HepG2 (cell line): ENCODE measurements at regions of chr16 and their contacts with region 1.

Region 1: GRCh38 chr16:66660422-66661209 is 35.9 kb downstream of the CMTM4 start:
- DNase-seq: peak; percentile 84
- ATAC-seq: peak; percentile 98
- H3K4me3 ChIP-seq: peak overlapping the region in 2 of 3 experiments; percentile 0 to 23; a peak in 2 of 6 replicates
- H3K27ac ChIP-seq: peak overlapping the region; percentile 39
- H3K4me1 ChIP-seq: peaks cover 37% of the 10 kb centered on the region
- H3K27me3 ChIP-seq: no peaks in the 10 kb centered on the region
- CTCF ChIP-seq: peak; percentile 77
- EP300 ChIP-seq: no peak
- POLR2A ChIP-seq: no peak
- RAD21 ChIP-seq: no peak

Region 2: DNA sequence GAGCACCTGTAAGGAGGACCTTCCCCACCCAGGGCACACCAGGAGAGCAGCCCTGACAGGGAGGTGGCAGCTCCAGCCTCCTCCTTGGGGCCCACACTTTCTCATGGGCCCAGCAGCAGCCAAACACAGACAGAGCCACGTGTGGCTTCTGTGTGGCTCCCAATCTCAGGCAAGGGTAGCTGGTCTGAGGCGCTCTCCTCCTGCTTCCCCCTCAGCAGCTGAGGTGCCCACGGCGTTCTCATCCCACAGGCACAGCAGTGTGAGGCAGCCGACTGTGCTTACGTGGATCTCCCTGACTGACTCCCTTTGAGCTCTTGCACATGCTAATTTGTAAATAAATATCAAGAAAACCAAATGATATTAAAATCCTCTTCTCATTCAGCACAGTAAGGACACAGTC is 25.2 kb before region 1 on chr16:
- CTCF ChIA-PET with region 1: no interaction called
- POLR2A ChIA-PET with region 1: no interaction called
- in situ Hi-C with region 1: no loop called
- intact Hi-C with region 1: no loop called
- DNase-seq: no peak
- ATAC-seq: peak; percentile 56
- H3K4me3 ChIP-seq: no peak overlapping the region
- H3K27ac ChIP-seq: no peak overlapping the region
- H3K4me1 ChIP-seq: peaks cover 18% of the 10 kb centered on the region
- H3K27me3 ChIP-seq: no peaks in the 10 kb centered on the region
- CTCF ChIP-seq: no peak
- EP300 ChIP-seq: no peak
- POLR2A ChIP-seq: no peak
- RAD21 ChIP-seq: no peak

Region 3: GRCh38 chr16:66692330-66692729 is 31.7 kb after region 1 on chr16:
- CTCF ChIA-PET with region 1: no interaction called
- POLR2A ChIA-PET with region 1: no interaction called
- in situ Hi-C with region 1: no loop called
- intact Hi-C with region 1: loop called (anchors 2 kb)
- DNase-seq: no peak
- ATAC-seq: no peak
- H3K4me3 ChIP-seq: no peak overlapping the region
- H3K27ac ChIP-seq: no peak overlapping the region
- H3K4me1 ChIP-seq: peaks cover 75% of the 10 kb centered on the region
- H3K27me3 ChIP-seq: peaks cover 0 to 2% of the 10 kb centered on the region in 2 experiments; a peak in 3 of 5 replicates
- CTCF ChIP-seq: no peak
- EP300 ChIP-seq: no peak
- POLR2A ChIP-seq: no peak
- RAD21 ChIP-seq: no peak

Region 4: DNA sequence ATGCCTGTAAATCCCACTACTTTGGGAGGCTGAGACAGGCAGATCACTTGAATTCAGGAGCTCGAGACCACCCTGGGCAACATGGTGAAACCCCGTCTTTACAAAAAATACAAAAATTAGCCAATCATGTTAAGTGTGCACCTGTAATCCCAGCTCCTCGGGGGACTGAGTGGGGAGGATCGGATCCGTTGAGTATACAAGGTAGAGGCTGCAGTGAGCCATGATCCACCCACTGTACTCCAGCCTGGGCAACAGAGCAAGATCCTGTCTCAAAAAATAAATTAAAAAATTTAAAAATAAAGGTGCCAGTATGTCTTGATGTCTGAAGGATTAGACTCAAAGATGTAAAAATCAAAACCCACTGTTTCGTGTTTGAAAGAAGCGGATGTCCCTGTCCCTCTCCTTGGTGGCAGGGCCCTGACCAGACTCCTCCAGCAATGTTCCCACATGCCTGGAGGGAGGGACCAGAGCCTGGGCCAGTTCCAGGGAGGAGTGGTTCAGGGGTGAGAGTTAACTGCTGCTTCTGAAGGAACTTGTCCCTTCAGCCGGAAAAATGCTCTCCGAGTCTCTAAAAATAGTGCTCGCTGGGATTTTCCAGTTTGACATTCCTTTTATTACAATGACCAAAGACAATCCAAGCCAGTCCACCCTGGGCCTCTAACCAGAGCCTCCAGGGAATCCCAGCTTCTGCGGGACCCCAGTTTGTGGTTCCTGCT is 45.3 kb after region 1 on chr16:
- CTCF ChIA-PET with region 1: no interaction called
- POLR2A ChIA-PET with region 1: no interaction called
- in situ Hi-C with region 1: no loop called
- intact Hi-C with region 1: no loop called
- DNase-seq: no peak
- ATAC-seq: no peak
- H3K4me3 ChIP-seq: no peak overlapping the region
- H3K27ac ChIP-seq: no peak overlapping the region
- H3K4me1 ChIP-seq: 0 out of 2 replicates have a peak, but pooled peaks cover 7% of the 10 kb centered on the region
- H3K27me3 ChIP-seq: peaks cover 0 to 24% of the 10 kb centered on the region in 2 experiments; a peak in 2 of 5 replicates
- CTCF ChIP-seq: no peak
- EP300 ChIP-seq: no peak
- POLR2A ChIP-seq: no peak
- RAD21 ChIP-seq: no peak

Region 5: DNA sequence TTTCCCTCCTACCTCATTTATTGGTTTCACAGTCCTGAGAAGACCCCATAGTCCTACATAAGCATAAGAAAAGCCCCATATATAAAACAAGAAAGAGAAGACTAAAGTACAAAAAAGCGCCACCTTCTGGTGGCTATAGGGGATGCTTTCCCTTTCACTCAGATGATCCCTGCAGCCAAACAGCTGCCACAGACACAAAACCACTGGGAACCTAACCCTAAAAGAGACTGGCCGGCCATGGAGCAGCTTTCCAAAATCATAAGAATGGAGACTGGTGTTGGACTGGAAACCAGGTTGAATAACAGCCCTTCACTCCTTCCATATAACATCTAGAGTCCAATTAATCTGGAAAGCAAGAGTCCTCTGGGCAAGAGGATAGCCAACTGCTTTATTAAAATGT is 79.4 kb after region 1 on chr16:
- CTCF ChIA-PET with region 1: interaction called, 5 read pairs
- POLR2A ChIA-PET with region 1: no interaction called
- in situ Hi-C with region 1: no loop called
- intact Hi-C with region 1: loop called (anchors 2 kb)
- DNase-seq: peak; percentile 39
- ATAC-seq: peak; percentile 81
- H3K4me3 ChIP-seq: no peak overlapping the region
- H3K27ac ChIP-seq: peak overlapping the region; percentile 3
- H3K4me1 ChIP-seq: peaks cover 30% of the 10 kb centered on the region
- H3K27me3 ChIP-seq: no peaks in the 10 kb centered on the region
- CTCF ChIP-seq: peak; percentile 51
- EP300 ChIP-seq: no peak
- POLR2A ChIP-seq: no peak
- RAD21 ChIP-seq: no peak

Region 6: DNA sequence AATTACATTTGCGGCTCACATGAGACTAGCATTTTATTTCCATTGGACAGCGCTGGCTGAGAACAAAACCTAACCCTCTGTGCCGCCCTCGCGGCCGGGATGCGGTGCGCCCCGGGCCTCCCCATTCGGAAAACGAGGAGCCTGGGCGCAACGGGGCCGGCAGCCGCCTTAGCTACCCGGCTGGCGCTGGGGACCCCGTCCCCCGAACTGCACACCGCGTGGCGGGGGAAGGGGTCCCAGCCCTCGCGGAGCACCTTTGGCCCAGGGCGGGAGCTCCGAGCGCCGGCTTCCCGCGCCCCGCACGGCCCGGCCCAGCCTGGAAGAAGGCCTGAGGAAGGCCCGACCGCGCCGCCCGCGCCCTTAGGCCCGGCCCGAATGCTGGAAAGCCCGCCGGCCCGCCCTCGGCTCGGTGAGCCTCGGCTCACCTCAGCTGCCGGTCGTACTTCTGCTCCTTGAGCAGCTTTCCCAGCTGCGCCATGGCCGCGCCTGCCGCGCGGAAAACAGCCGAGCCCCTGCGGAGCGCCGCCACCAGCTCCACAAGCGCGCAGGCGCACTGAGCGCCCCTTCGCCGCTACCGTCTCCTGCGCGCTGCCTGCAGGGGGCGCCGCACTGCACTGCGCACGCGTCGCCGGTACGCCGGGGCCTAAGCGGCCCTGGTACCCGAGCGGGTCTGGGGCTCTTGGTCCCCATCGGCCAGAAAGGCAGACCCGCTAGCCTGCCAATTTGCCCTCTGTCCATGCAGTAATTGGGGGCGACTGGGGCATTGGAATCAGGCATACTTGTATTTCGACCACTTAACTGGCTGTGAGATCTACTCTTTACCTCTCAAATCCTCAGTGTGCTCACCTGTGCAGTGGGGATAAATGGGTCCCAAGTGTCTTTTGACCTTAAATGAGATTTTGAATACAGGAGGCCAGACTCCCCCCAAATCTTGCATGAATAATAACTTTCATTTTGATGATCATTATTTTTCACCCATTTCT is 170.1 kb after region 1 on chr16 and contains the start of gene NAE1:
- CTCF ChIA-PET with region 1: no interaction called
- POLR2A ChIA-PET with region 1: no interaction called
- in situ Hi-C with region 1: no loop called
- intact Hi-C with region 1: loop called (anchors 5 kb)
- DNase-seq: peak; percentile 81
- ATAC-seq: peak; percentile 95
- H3K4me3 ChIP-seq: peak within 1 kb of the TSS; percentile 85 to 93 (median 89)
- H3K27ac ChIP-seq: peak within 1 kb of the TSS; percentile 88
- H3K4me1 ChIP-seq: peaks cover 48% of the 10 kb centered on the region
- H3K27me3 ChIP-seq: peaks cover 0 to 18% of the 10 kb centered on the region in 2 experiments; a peak in 3 of 5 replicates
- CTCF ChIP-seq: peak; percentile 99
- EP300 ChIP-seq: no peak
- POLR2A ChIP-seq: peak; percentile 91 to 97
- RAD21 ChIP-seq: peak; percentile 83
- total RNA-seq, gene NAE1: 206 and 279 TPM in 2 replicates

Region 7: GRCh38 chr16:67084345-67085028 is 423.9 kb after region 1 on chr16:
- CTCF ChIA-PET with region 1: no interaction called
- POLR2A ChIA-PET with region 1: no interaction called
- in situ Hi-C with region 1: no loop called
- intact Hi-C with region 1: no loop called
- DNase-seq: peak; percentile 56
- ATAC-seq: 0 out of 3 replicates have a peak, but pooled peaks have one; percentile 36
- H3K4me3 ChIP-seq: no peak overlapping the region
- H3K27ac ChIP-seq: no peak overlapping the region
- H3K4me1 ChIP-seq: peaks cover 7% of the 10 kb centered on the region; the same call in 1 of the 2 replicates
- H3K27me3 ChIP-seq: no peaks in the 10 kb centered on the region
- CTCF ChIP-seq: no peak
- EP300 ChIP-seq: no peak
- POLR2A ChIP-seq: no peak
- RAD21 ChIP-seq: no peak